Activated B cell treated with CpG ODN at 0.5 μM for 24 hours (primary cell): ENCODE measurements at regions of chr12 and their contacts with region 1.

Region 1: GRCh38 chr12:120249875-120250795 is 15.4 kb downstream of the PXN start:
- DNase-seq: no peak
- ATAC-seq: peak; percentile 69
- H3K4me3 Mint-ChIP-seq: no peak overlapping the region
- H3K27ac Mint-ChIP-seq: no peak overlapping the region
- H3K4me1 Mint-ChIP-seq: peaks cover 52% of the 10 kb centered on the region
- H3K27me3 Mint-ChIP-seq: peaks cover 32% of the 10 kb centered on the region
- CTCF ChIP-seq: no peak

Region 2: DNA sequence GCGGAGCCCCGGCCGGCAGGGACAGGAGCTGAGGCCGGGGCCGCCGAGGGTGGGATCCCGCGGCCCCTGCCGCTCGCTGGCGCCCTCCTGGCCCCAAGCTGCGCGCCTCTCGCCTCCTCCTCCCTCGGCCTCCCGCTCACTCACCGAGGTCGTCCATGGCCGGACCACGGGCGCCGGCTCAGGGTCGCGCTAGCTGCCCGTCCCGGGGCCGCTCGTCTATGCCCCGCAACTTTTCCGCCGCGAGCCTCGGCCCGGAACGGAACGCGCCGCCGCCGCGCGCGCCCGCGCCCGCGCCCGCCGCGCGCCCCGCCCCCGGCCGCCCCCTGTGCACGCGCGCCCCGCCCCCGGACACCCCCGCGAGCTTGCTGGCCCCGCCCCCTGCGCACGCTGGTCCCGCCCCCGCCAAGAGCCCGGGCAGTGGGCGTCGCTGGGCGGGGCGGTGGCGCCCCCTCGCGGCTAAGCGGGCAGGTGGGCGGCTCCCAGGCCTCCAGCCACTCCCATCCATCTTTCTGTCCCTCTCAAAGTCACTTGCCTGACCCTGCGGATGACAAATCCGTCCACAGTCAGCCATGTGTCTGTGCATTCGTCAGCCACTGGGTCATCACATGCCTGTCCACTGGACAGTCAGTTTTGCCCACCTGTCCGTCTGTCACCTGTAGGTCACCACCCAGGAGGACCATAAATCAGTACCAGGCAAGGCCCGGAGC is 15.5 kb after region 1 on chr12 and contains the start of gene PXN:
- CTCF ChIA-PET with region 1: interaction called, 8 read pairs
- POLR2A ChIA-PET with region 1: interaction called, 6 read pairs
- intact Hi-C with region 1: loop called (anchors 1 kb)
- DNase-seq: peak; percentile 87
- ATAC-seq: peak; percentile 95
- H3K4me3 Mint-ChIP-seq: peak within 1 kb of the TSS; percentile 86
- H3K27ac Mint-ChIP-seq: peak within 1 kb of the TSS; percentile 59
- H3K4me1 Mint-ChIP-seq: peaks cover 18% of the 10 kb centered on the region
- H3K27me3 Mint-ChIP-seq: peaks cover 20% of the 10 kb centered on the region
- CTCF ChIP-seq: no peak
- total RNA-seq, gene PXN: 1.7 and 2.9 TPM in 2 replicates